ENCODE measurements at regions of chr3 and their contacts with region 1.

Region 1: GRCh38 chr3:125055913-125056745 is at the start of gene HEG1:
- DNase-seq: peak; percentile 84
- ATAC-seq: peak; percentile 63
- H3K4me3 Mint-ChIP-seq: peak within 1 kb of the TSS; percentile 78
- H3K27ac Mint-ChIP-seq: peak within 1 kb of the TSS; percentile 77
- H3K4me1 Mint-ChIP-seq: peaks cover 35% of the 10 kb centered on the region
- H3K27me3 Mint-ChIP-seq: peaks cover 9% of the 10 kb centered on the region
- CTCF ChIP-seq: no peak
- total RNA-seq, gene HEG1: 24.5 to 25.8 TPM

Region 2: DNA sequence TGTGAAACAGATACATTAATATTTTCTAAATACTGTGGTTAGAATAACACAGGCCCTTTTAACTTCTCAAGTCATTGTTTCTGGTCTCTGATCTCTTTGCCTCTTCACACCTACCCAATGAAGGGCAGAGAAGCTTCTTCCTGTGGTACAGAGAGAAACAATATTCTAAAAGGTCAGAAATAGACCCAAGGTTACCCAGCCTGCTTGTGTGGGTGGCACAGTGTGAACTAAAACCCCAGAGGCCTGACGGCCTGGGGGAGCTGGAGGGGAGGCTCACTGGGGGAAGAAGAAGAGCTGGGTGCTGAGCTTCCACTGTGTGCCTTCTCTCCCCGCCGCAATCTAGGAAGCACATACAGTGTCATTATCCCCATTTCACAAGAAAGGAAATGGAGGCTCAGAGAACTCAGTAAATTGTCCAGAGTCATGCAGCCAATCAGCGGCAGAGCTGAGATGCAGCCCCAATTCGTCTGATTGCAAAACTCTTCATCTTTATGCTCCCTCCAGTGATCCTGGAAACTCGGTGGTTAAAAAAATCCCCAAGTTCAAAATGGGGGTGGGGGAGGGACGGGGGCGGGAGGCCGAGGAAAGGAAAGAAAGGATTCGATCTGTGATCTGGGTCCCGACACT is 63.7 kb after region 1 on chr3:
- CTCF ChIA-PET with region 1: interaction called, 5 read pairs
- POLR2A ChIA-PET with region 1: no interaction called
- intact Hi-C with region 1: loop called (anchors 5 kb)
- DNase-seq: peak; percentile 89
- ATAC-seq: peak; percentile 89
- H3K4me3 Mint-ChIP-seq: peak overlapping the region; percentile 34
- H3K27ac Mint-ChIP-seq: peak overlapping the region; percentile 90
- H3K4me1 Mint-ChIP-seq: peaks cover 66% of the 10 kb centered on the region
- H3K27me3 Mint-ChIP-seq: peaks cover under 1% of the 10 kb centered on the region
- CTCF ChIP-seq: no peak

Region 3: GRCh38 chr3:125141596-125142419 is 85.7 kb after region 1 on chr3:
- CTCF ChIA-PET with region 1: interaction called, 3 read pairs
- POLR2A ChIA-PET with region 1: interaction called, 3 read pairs
- intact Hi-C with region 1: loop called (anchors 5 kb)
- DNase-seq: peak; percentile 91
- ATAC-seq: peak; percentile 85
- H3K4me3 Mint-ChIP-seq: peak overlapping the region; percentile 60
- H3K27ac Mint-ChIP-seq: peak overlapping the region; percentile 90
- H3K4me1 Mint-ChIP-seq: peaks cover 38% of the 10 kb centered on the region
- H3K27me3 Mint-ChIP-seq: peaks cover 16% of the 10 kb centered on the region
- CTCF ChIP-seq: peak; percentile 22

Region 4: GRCh38 chr3:125357032-125357658 is 301.0 kb after region 1 on chr3:
- CTCF ChIA-PET with region 1: no interaction called
- POLR2A ChIA-PET with region 1: no interaction called
- intact Hi-C with region 1: loop called (anchors 10 kb)
- DNase-seq: peak; percentile 74
- ATAC-seq: peak; percentile 95
- H3K4me3 Mint-ChIP-seq: peak overlapping the region; percentile 78
- H3K27ac Mint-ChIP-seq: peak overlapping the region; percentile 95
- H3K4me1 Mint-ChIP-seq: peaks cover 58% of the 10 kb centered on the region
- H3K27me3 Mint-ChIP-seq: no peaks in the 10 kb centered on the region
- CTCF ChIP-seq: no peak

Region 5: DNA sequence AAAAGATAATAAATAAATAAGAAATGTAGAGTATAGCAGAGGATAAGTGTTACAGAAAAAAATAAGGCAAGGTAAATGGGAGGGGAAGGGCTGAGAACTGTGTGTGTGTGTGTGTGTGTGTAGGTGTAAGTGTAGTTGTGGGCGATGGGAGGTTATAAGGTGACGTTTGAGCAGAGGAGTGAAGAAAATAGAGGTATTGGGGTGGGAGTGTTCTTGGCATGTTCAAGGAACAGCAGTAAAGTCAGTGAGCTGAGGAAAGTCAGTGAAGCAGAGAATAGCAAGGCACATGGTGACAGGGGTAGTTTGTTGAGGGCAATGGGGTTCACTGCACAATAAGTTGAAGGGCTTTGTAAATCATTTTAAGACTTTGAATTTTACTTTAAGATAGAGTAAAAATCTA is 349.9 kb after region 1 on chr3:
- CTCF ChIA-PET with region 1: no interaction called
- POLR2A ChIA-PET with region 1: no interaction called
- intact Hi-C with region 1: no loop called
- DNase-seq: no peak
- ATAC-seq: no peak
- H3K4me3 Mint-ChIP-seq: no peak overlapping the region
- H3K27ac Mint-ChIP-seq: no peak overlapping the region
- H3K4me1 Mint-ChIP-seq: no peaks in the 10 kb centered on the region
- H3K27me3 Mint-ChIP-seq: peaks cover 18% of the 10 kb centered on the region
- CTCF ChIP-seq: no peak

Measured in activated CD8-positive, alpha-beta T cell treated with anti-CD3 and anti-CD28 coated beads for 36 hours (primary cell).